ENCODE measurements at regions of chr9 and their contacts with region 1.

Region 1: DNA sequence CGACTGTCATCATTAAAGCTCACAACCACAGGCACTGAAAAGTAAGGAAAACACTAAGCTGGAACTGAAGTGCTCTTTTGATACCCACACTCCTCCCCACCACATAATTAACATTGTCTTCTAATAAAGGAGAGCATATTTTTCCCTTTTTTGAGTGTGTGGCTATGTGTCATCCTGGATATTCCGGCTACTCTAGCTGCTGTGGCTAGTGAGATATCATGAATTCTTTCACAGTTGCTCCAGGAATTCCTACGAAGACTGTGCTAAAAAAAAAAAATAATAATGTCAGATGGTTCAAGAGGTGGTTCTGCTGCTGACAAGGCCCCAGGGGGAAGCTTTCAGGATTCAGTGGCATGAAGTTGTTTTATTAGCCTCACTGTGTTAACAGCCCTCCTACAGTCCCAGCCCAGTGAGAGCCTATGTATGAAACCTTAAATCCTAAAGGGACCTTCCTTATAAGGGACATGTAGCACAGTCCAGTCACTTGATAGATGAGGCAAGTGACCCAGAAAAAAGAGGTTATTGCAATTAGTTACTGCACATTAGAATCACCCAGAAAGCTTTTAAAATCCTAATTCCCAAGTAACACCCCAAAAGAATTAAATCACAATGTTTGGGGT is 46.6 kb downstream of the TMEM252 start:
- DNase-seq: no peak
- ATAC-seq: no peak
- H3K4me3 ChIP-seq: no peak overlapping the region
- H3K27ac ChIP-seq: no peak overlapping the region
- H3K4me1 ChIP-seq: no peaks in the 10 kb centered on the region
- H3K27me3 ChIP-seq: peaks cover 55% of the 10 kb centered on the region
- CTCF ChIP-seq: no peak
- POLR2A ChIP-seq: no peak
- RAD21 ChIP-seq: no peak

Region 2: DNA sequence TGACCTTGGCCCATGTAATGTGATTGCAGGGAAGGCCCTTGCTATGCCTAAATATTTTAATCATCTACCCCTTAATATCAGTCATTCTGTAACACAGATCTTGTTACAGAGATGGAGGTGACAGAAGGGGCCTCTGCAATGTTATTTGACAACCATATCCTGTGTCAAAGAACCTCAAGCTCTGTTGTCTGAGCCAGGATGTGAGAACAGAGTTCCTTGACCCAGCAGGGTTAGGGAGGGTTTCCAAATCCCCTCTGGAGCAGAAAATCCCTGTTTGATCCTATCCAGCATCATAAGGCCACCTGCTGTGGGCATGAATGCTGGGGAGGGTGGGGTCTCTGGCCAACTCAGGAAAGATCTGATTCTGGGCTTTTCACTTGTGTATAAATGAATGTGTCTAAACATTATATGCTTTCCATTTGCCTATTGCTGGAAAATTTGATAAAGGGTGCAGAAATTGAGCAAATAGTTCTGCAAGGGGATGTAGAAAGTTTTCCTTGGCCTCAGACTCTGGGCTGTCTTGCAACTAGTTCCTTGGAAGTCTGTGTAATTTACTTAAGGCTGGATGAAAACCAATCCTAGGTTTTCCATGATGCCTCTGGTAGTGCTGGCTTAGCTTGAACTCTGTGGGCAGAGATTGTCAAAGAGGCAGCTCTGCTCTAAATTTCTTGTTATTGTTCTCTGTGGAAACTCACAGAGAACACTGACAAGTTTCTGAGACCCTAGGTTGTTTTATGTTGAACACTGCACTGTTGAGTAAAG is 66.7 kb before region 1 on chr9:
- CTCF ChIA-PET with region 1: no interaction called
- POLR2A ChIA-PET with region 1: no interaction called
- RAD21 ChIA-PET with region 1: no interaction called
- intact Hi-C with region 1: loop called (anchors 10 kb)
- DNase-seq: no peak
- ATAC-seq: no peak
- H3K4me3 ChIP-seq: no peak overlapping the region
- H3K27ac ChIP-seq: no peak overlapping the region
- H3K4me1 ChIP-seq: no peaks in the 10 kb centered on the region
- H3K27me3 ChIP-seq: peaks cover 14% of the 10 kb centered on the region; the same call in 1 of the 2 replicates
- CTCF ChIP-seq: no peak
- POLR2A ChIP-seq: no peak
- RAD21 ChIP-seq: no peak

Region 3: GRCh38 chr9:68515326-68515901 is 21.3 kb after region 1 on chr9:
- CTCF ChIA-PET with region 1: no interaction called
- POLR2A ChIA-PET with region 1: no interaction called
- RAD21 ChIA-PET with region 1: no interaction called
- intact Hi-C with region 1: no loop called
- DNase-seq: no peak
- ATAC-seq: no peak
- H3K4me3 ChIP-seq: no peak overlapping the region
- H3K27ac ChIP-seq: no peak overlapping the region
- H3K4me1 ChIP-seq: no peaks in the 10 kb centered on the region
- H3K27me3 ChIP-seq: no peaks in the 10 kb centered on the region
- CTCF ChIP-seq: no peak
- POLR2A ChIP-seq: no peak
- RAD21 ChIP-seq: no peak

Region 4: DNA sequence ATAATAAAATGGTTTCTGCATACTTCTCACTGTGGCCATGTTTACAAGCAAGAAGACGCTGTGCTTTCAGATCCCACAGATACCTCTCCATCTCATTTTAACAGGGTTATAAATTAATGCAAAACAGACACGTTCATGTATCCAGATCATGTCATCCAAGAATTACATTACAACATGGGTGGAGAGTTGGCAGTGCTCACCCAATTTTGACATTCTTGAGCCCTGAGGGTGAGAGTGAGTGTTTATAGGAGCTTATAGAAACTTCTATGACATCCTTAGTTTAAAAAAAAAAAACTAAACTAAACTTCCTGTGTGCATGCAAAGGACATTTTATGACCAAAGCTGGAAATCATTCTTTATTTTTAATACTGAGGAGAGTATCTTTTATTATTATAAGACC is 510.8 kb after region 1 on chr9:
- CTCF ChIA-PET with region 1: no interaction called
- POLR2A ChIA-PET with region 1: no interaction called
- RAD21 ChIA-PET with region 1: no interaction called
- intact Hi-C with region 1: no loop called
- DNase-seq: no peak
- ATAC-seq: no peak
- H3K4me3 ChIP-seq: no peak overlapping the region
- H3K27ac ChIP-seq: no peak overlapping the region
- H3K4me1 ChIP-seq: no peaks in the 10 kb centered on the region
- H3K27me3 ChIP-seq: peaks cover 7% of the 10 kb centered on the region; the same call in 1 of the 2 replicates
- CTCF ChIP-seq: no peak
- POLR2A ChIP-seq: no peak
- RAD21 ChIP-seq: no peak